CD4-positive, alpha-beta memory T cell (primary cell): ENCODE measurements at regions of chr12 and their contacts with region 1.

Region 1: GRCh38 chr12:109518820-109519665 is 41.6 kb downstream of the UBE3B start:
- DNase-seq: peak in 4 of 5 donors; percentile 40 to 52 (median 44)
- H3K4me3 ChIP-seq: no peak overlapping the region
- H3K4me3 Mint-ChIP-seq: no peak overlapping the region
- H3K27ac ChIP-seq: no peak overlapping the region
- H3K27ac Mint-ChIP-seq: no peak overlapping the region
- H3K4me1 ChIP-seq: no peaks in the 10 kb centered on the region
- H3K4me1 Mint-ChIP-seq: no peaks in the 10 kb centered on the region
- H3K27me3 ChIP-seq: no peaks in the 10 kb centered on the region
- H3K27me3 Mint-ChIP-seq: no peaks in the 10 kb centered on the region

Region 2: DNA sequence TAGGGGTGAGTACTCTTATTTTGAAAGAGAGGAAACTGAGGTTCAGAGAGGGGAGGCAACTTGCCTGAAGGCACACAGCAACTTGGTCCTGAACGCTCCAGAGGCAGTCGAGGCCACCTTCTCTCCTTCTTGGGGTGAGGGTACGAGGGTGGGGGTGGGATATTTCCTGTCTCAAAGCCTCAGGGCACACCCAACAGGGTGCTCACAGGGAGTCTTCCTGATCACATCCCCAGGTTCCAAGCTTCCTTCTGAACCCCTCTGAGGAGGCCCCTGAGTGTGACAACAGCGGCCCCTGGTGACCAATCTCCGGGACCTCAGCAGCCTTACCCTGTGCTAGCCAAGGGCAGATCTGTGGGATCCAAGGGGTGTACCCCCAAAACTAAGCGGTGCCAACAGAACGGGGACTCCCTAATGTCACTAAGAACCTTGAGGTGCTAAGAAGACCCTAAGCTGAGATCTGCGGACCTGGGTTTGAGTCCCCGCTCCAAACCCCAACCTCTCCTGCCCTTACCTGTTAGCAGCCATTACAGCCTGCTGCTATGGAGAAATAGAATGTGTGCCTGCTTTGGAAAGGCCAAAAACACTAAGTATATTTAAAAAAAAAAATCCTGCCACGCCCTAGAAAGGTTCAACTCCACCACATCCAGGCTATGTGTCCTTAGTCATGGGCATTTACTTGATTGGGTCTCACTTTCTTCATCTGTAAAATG is 256.3 kb after region 1 on chr12:
- CTCF ChIA-PET with region 1: interaction called, 43 read pairs
- POLR2A ChIA-PET with region 1: no interaction called
- intact Hi-C with region 1: no loop called
- DNase-seq: peak; percentile 56 to 68 (median 61)
- H3K4me3 ChIP-seq: no peak overlapping the region
- H3K4me3 Mint-ChIP-seq: no peak overlapping the region
- H3K27ac ChIP-seq: no peak overlapping the region
- H3K27ac Mint-ChIP-seq: no peak overlapping the region
- H3K4me1 ChIP-seq: no peaks in the 10 kb centered on the region
- H3K4me1 Mint-ChIP-seq: peaks cover 5 to 9% (median 6%) of the 10 kb centered on the region in 4 donors
- H3K27me3 ChIP-seq: no peaks in the 10 kb centered on the region
- H3K27me3 Mint-ChIP-seq: peaks cover 1 to 3% of the 10 kb centered on the region in 2 donors